CD8-positive, alpha-beta T cell (primary cell): ENCODE measurements at regions of chr2 and their contacts with region 1.

Region 1: DNA sequence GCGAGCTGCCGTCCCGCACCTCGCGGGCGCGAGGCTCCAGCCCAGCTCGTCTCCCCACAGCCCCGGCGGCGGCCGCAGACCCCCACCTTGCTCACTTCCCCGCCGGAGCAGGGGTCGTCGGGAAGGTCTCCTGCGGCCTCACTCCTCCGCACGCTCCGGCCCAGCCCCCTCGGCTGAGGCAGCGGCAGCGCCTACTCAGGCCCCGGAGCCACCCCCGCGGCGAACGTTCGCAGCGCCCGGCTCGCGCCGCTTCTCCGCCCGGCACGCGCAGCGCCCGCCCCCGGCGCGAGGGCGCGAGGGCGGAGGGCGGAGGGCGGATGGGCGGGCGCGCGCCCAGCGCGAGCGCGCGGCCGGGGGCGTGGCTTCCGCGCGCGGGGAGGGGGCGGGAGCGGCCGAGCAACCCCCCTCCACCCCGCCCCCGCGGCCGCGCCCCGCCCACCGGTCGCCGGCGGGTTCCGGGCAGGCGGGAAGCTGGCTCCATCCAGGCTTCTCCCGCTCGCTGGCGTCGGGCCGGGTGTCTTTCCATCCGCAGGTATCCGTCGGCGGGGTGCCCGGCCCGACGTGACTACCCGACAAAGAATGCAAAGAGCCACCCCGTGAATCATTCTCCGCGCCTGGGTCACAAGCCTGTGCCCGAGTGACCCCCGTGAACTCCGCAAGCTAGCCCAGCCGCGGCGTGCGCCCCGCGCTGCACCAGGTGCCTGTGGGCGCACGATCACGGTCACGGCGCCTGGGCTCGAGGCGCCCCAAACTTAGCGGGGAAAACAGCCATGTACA is at the start of gene DTNB:
- DNase-seq: peak; percentile 52 to 91 (median 77)
- ATAC-seq: peak; percentile 73
- H3K4me3 ChIP-seq: peak within 1 kb of the TSS; percentile 75 to 76
- H3K4me3 Mint-ChIP-seq: peak within 1 kb of the TSS; percentile 88
- H3K27ac ChIP-seq: peak within 1 kb of the TSS; percentile 62 to 70
- H3K27ac Mint-ChIP-seq: peak within 1 kb of the TSS; percentile 83
- H3K4me1 ChIP-seq: peaks cover 15% of the 10 kb centered on the region
- H3K4me1 Mint-ChIP-seq: peaks cover 33% of the 10 kb centered on the region
- H3K27me3 ChIP-seq: no peaks in the 10 kb centered on the region
- H3K27me3 Mint-ChIP-seq: no peaks in the 10 kb centered on the region
- CTCF ChIP-seq: no peak
- total RNA-seq, gene DTNB: 27.1 to 33.2 TPM

Region 2: DNA sequence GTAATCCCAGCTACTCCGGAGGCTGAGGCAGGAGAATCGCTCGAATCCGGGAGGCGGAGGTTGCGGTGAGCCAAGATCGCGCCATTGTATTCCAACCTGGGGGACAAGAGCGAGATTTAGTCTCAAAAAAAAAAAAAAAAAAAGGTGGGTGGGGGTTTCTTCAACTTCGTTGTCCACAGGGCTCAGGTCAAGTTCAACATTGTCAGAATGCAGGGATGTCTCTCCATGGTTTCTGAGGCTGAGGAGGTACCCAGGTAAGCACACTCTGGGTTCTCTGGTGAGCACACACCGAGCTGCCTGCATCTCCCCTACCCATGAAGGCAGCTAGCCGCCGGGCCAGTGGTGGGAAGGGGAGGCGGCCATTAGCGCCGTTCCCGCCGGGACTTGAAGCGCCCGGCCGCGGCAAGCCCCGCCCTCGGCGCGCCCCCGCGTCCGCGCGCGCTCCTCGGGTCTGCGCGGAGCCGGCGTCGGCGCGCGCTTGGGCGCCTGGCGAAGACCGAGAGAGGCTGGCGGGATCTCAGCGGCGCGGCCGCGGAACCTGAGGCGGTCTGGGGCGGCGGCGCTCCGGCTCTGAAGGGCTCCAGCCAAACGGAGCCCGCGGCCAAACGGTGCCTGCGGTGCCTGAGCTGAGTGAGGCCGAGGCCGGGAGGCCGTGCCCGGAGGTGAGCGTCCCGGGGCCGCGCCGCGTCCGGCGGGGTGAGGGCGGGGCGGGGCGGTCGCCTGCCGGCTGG is 1733.3 kb before region 1 on chr2 and contains the start of gene UBXN2A:
- CTCF ChIA-PET with region 1: no interaction called
- POLR2A ChIA-PET with region 1: no interaction called
- intact Hi-C with region 1: loop called (anchors 10 kb)
- DNase-seq: peak; percentile 53 to 92 (median 70)
- ATAC-seq: peak; percentile 82
- H3K4me3 ChIP-seq: peak within 1 kb of the TSS; percentile 90 to 97
- H3K4me3 Mint-ChIP-seq: peak within 1 kb of the TSS; percentile 94
- H3K27ac ChIP-seq: peak within 1 kb of the TSS; percentile 59 to 64
- H3K27ac Mint-ChIP-seq: peak within 1 kb of the TSS; percentile 88
- H3K4me1 ChIP-seq: peaks cover 6% of the 10 kb centered on the region
- H3K4me1 Mint-ChIP-seq: peaks cover 33% of the 10 kb centered on the region
- H3K27me3 ChIP-seq: no peaks in the 10 kb centered on the region
- H3K27me3 Mint-ChIP-seq: no peaks in the 10 kb centered on the region
- CTCF ChIP-seq: no peak
- total RNA-seq, gene UBXN2A: 17.7 to 18.0 TPM

Region 3: DNA sequence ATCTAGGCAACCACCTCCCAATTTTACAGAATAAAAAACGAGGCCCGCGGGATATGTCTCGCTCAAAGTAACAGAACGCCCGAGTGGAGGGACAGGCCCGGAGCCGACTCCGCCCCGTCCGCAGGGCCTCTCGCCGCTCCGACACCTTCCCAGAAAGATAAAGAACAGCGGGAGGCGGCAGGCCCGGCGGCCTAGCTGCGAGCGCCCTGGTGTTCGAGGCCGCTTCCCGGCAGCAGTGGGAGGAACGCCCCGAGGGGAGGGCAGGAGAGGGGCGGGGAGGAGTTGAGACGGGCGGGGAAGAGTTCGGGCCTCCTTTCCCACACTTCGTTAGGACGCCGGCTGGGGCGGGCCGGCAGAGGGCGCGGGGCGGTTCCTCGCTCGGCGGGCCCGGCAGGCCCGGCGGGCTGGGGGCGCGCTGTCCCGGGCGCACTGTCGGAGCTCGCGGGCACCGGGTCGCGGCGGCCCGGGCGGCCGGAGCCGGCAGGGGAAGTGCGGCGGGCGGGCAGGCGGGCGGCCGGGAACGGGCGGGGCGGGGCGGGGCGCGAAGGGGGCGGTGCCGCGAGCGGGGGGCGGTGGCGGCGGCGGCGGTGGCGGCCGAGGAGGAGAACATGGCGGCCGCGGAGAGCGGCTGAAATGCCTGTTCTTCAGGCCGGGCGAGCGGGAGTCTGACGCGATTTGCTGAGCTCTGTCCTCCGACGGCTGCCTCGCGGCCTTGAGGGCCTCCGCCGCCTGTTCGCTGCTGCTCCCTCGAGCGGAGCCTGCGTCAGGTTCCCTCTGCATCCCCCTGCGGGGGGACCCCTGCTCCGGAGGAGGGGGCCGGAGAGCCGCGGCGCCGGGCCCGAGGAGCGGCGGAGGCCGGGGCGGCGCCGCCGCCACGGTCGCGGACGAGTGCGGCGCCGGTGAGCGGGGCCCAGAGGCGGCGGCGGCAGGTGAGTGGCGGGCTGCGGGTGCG is 1182.5 kb before region 1 on chr2 and contains the start of gene NCOA1:
- CTCF ChIA-PET with region 1: no interaction called
- POLR2A ChIA-PET with region 1: no interaction called
- intact Hi-C with region 1: loop called in 1 of 2 experiments (anchors 10 kb)
- DNase-seq: peak; percentile 77 to 94 (median 89)
- ATAC-seq: peak; percentile 85
- H3K4me3 ChIP-seq: peak within 1 kb of the TSS; percentile 63 to 72
- H3K4me3 Mint-ChIP-seq: peak within 1 kb of the TSS; percentile 89
- H3K27ac ChIP-seq: peak within 1 kb of the TSS; percentile 70 to 93
- H3K27ac Mint-ChIP-seq: peak within 1 kb of the TSS; percentile 94
- H3K4me1 ChIP-seq: peaks cover 37% of the 10 kb centered on the region
- H3K4me1 Mint-ChIP-seq: peaks cover 53% of the 10 kb centered on the region
- H3K27me3 ChIP-seq: no peaks in the 10 kb centered on the region
- H3K27me3 Mint-ChIP-seq: no peaks in the 10 kb centered on the region
- CTCF ChIP-seq: no peak
- total RNA-seq, gene NCOA1: 32.6 to 33.5 TPM

Region 4: DNA sequence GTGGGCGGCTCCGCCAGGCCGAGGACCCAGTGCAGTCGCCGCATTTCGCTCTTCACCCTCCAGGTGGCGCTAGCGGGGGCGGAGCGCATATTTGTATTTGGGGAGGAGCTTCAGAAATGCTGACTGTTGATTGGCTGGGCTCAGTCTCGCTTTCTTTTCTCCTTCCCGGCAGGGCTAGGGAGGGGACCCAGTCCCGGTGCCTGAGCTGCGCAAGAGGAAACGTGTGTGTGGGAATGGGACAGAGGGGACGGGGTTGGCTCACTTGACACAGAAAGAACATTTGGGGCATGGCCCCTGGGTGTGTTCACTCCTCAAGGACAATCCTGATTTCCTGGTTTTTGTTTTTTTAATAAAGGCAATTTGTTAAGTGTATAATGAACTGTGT is 311.4 kb before region 1 on chr2:
- CTCF ChIA-PET with region 1: no interaction called
- POLR2A ChIA-PET with region 1: no interaction called
- intact Hi-C with region 1: loop called in 1 of 2 experiments (anchors 5 kb)
- DNase-seq: peak; percentile 87 to 99 (median 94)
- ATAC-seq: peak; percentile 94
- H3K4me3 ChIP-seq: peak overlapping the region; percentile 65 to 73
- H3K4me3 Mint-ChIP-seq: peak overlapping the region; percentile 89
- H3K27ac ChIP-seq: peak overlapping the region; percentile 49 to 84
- H3K27ac Mint-ChIP-seq: peak overlapping the region; percentile 94
- H3K4me1 ChIP-seq: peaks cover 15% of the 10 kb centered on the region
- H3K4me1 Mint-ChIP-seq: peaks cover 20% of the 10 kb centered on the region
- H3K27me3 ChIP-seq: no peaks in the 10 kb centered on the region
- H3K27me3 Mint-ChIP-seq: no peaks in the 10 kb centered on the region
- CTCF ChIP-seq: peak; percentile 94

Region 5: DNA sequence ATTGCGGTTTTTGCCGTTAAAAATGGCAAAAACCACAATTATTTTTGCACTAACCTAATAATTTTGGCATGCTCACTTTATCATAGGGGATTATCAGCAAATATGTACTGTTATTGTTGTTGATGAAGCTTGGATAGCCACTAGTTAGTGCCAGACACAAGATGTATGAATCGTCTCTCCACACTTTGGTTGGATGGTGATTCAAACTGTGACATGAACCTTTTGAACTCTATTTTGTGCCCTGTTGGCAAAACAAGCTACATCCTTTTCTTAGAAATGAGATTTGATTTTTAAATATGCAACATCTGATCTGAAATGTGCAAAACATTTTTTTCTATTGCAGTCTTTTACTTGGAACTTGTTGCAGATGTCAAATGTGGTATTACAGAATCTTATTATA is 48.7 kb after region 1 on chr2:
- CTCF ChIA-PET with region 1: no interaction called
- POLR2A ChIA-PET with region 1: no interaction called
- intact Hi-C with region 1: no loop called
- DNase-seq: no peak
- ATAC-seq: no peak
- H3K4me3 ChIP-seq: no peak overlapping the region
- H3K4me3 Mint-ChIP-seq: no peak overlapping the region
- H3K27ac ChIP-seq: no peak overlapping the region
- H3K27ac Mint-ChIP-seq: no peak overlapping the region
- H3K4me1 ChIP-seq: no peaks in the 10 kb centered on the region
- H3K4me1 Mint-ChIP-seq: peaks cover 4% of the 10 kb centered on the region
- H3K27me3 ChIP-seq: peaks cover 0 to 3% of the 10 kb centered on the region in 2 experiments
- H3K27me3 Mint-ChIP-seq: peaks cover 10% of the 10 kb centered on the region
- CTCF ChIP-seq: no peak

Region 6: DNA sequence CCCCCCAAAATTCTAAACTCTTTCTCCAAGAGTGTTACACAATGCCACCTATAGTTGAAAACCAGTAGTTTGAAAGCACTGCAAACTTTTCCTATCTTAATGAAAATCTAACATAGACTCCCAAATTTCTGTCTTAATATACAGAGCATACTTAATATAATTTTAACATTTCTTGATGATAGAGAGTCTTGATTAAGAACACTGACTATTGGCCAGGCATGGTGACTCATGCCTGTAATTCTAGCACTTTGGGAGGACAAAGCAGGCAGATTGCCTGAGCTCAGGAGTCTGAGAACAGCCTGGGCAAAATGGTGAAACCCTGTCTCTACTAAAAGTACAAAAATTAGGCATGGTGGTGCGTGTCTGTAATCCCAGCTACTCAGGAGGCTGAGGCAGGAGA is 170.6 kb after region 1 on chr2:
- CTCF ChIA-PET with region 1: no interaction called
- POLR2A ChIA-PET with region 1: no interaction called
- intact Hi-C with region 1: no loop called
- DNase-seq: no peak
- ATAC-seq: no peak
- H3K4me3 ChIP-seq: no peak overlapping the region
- H3K4me3 Mint-ChIP-seq: no peak overlapping the region
- H3K27ac ChIP-seq: no peak overlapping the region
- H3K27ac Mint-ChIP-seq: no peak overlapping the region
- H3K4me1 ChIP-seq: no peaks in the 10 kb centered on the region
- H3K4me1 Mint-ChIP-seq: peaks cover 12% of the 10 kb centered on the region
- H3K27me3 ChIP-seq: no peaks in the 10 kb centered on the region
- H3K27me3 Mint-ChIP-seq: no peaks in the 10 kb centered on the region
- CTCF ChIP-seq: no peak

Region 7: DNA sequence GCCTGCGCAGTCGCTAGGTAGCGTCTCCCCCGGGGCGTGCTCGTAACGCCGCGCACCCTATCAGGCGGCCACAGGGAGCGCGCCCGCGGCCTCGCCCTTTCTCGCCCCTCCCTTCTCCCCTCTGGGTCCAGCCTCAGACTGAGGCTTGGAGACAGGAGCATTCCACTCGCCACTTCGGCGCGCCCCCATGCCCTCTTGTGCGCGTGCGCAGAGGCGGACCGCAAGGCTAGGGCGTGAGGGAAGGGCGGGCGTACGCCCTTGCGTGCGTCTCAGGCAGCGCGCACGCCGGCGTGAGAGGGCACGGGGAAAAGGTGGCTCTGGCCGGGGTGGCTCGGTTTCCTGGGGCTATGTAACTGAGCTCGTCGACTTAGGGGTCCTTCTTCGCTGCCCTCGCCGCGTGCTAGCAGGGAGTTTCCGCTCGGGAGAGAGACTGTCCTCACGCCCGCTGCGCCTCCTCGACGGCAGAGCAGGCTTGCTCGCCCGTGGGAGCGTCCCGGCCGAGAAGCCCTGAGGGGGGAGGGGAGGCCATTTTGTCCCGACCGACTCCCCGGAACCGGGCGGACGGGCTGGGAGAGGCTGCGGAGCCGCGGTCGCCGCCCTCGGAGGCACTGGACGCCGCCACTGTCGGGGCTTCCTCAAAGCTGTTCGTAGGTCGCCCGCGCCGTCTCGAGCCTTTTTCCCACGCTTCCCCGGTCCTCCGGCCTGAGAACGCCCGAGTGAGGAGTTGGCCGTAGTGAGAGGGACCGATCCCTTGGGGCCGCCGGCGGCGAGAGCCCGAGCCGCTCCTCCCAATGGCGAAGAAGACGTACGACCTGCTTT is 360.5 kb after region 1 on chr2 and contains the start of gene RAB10:
- CTCF ChIA-PET with region 1: no interaction called
- POLR2A ChIA-PET with region 1: no interaction called
- intact Hi-C with region 1: loop called in 1 of 2 experiments (anchors 1 kb)
- DNase-seq: peak; percentile 98 to 100 (median 99)
- ATAC-seq: peak; percentile 89
- H3K4me3 ChIP-seq: peak within 1 kb of the TSS; percentile 82 to 99
- H3K4me3 Mint-ChIP-seq: peak within 1 kb of the TSS; percentile 95
- H3K27ac ChIP-seq: peak within 1 kb of the TSS; percentile 92 to 93
- H3K27ac Mint-ChIP-seq: peak within 1 kb of the TSS; percentile 98
- H3K4me1 ChIP-seq: peaks cover 29% of the 10 kb centered on the region
- H3K4me1 Mint-ChIP-seq: peaks cover 40% of the 10 kb centered on the region
- H3K27me3 ChIP-seq: no peaks in the 10 kb centered on the region
- H3K27me3 Mint-ChIP-seq: no peaks in the 10 kb centered on the region
- CTCF ChIP-seq: no peak
- total RNA-seq, gene RAB10: 12.7 TPM

Region 8: DNA sequence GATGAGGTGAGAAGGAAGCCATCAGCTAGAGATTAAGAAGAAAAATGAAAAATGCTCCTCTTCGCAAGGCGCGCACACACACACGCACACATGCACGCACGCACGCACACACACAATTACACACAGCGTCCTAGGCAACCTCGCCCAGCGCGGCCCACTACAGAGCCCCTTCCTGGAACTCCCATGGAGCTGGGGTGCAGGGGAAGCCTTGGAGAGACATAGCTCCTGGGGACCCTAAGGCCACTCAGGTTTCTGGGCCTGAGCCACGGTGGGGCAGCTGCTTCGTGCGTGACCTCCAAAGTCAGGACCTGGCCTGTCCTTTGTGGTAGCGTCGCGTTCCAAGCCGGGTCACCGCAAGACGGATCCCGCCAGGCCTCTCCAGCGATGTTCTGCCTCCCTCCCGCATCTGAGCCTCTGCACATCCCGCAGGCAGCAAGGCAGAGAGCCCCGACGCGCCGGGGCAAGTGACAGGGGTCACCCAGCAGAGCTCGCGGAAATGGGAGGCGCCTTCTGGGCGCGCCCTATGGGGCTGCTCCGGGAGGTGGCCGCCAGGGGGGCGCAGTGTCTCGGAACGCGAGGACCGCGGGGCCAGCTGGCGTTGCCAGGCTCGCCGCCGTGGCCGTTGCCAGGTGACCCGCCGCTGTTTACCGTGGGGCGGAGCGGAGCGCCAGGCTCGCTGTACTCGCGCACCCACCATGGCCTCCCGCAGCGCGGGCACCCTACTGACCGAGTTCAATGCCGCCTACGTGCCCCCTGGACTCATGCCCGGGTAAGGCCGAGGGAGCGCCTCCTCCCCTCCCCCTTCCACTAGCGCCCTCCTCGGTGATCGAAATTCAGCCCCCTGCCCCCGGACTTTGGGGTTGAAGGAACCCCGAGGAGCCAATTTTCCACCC is 888.7 kb after region 1 on chr2:
- CTCF ChIA-PET with region 1: no interaction called
- POLR2A ChIA-PET with region 1: no interaction called
- intact Hi-C with region 1: no loop called
- DNase-seq: peak in 5 of 9 experiments; percentile 10 to 45 (median 18)
- ATAC-seq: peak; percentile 62
- H3K4me3 ChIP-seq: peak overlapping the region in 1 of 2 experiments; percentile 13
- H3K4me3 Mint-ChIP-seq: peak overlapping the region; percentile 26
- H3K27ac ChIP-seq: no peak overlapping the region
- H3K27ac Mint-ChIP-seq: no peak overlapping the region
- H3K4me1 ChIP-seq: peaks cover 6% of the 10 kb centered on the region
- H3K4me1 Mint-ChIP-seq: peaks cover 6% of the 10 kb centered on the region
- H3K27me3 ChIP-seq: peaks cover 4 to 18% of the 10 kb centered on the region in 2 experiments
- H3K27me3 Mint-ChIP-seq: peaks cover 62% of the 10 kb centered on the region
- CTCF ChIP-seq: no peak